Activated B cell treated with CpG ODN at 0.5 μM for 24 hours (primary cell): ENCODE measurements at regions of chr3 and their contacts with region 1.

Region 1: DNA sequence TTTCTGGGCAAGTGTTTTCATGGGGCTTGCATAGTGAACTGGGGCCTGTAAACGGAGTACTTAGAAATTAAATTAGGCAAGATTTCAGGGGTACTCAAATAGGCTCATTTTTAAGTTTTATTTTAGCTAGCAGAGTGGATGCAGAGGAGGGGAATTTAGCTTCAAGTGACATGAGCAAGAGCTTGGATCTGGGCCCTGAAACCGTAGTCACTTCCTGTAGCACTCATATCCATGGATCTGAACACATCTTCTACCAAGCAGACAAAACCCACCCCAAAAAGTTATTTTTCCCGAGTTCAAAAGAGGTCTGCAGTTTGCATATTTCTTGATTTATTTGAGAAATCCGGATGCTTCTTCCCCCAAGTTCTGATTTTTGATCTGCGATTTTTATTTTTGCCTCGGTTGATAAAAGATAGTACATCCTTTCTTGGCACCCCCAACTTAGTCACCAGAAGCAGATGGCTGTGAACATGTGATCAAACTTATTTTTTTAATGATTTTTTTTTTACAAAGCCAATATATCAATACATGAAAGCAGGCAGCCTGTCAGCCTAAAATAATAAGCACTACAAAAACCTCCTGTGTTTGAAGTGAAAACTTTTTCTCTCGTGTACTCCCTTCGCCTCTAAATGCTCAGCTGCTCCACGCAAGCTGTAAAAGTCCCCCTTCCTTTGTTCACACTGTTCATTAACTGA is 36.6 kb upstream of the STT3B start:
- DNase-seq: no peak
- ATAC-seq: no peak
- H3K4me3 Mint-ChIP-seq: no peak overlapping the region
- H3K27ac Mint-ChIP-seq: no peak overlapping the region
- H3K4me1 Mint-ChIP-seq: no peaks in the 10 kb centered on the region
- H3K27me3 Mint-ChIP-seq: peaks cover 4% of the 10 kb centered on the region
- CTCF ChIP-seq: no peak

Region 2: GRCh38 chr3:31439890-31440750 is 56.0 kb before region 1 on chr3:
- CTCF ChIA-PET with region 1: no interaction called
- POLR2A ChIA-PET with region 1: no interaction called
- intact Hi-C with region 1: no loop called
- DNase-seq: no peak
- ATAC-seq: no peak
- H3K4me3 Mint-ChIP-seq: no peak overlapping the region
- H3K27ac Mint-ChIP-seq: no peak overlapping the region
- H3K4me1 Mint-ChIP-seq: peaks cover 5% of the 10 kb centered on the region
- H3K27me3 Mint-ChIP-seq: no peaks in the 10 kb centered on the region
- CTCF ChIP-seq: no peak

Region 3: GRCh38 chr3:31462050-31462569 is 34.0 kb before region 1 on chr3:
- CTCF ChIA-PET with region 1: no interaction called
- POLR2A ChIA-PET with region 1: interaction called, 12 read pairs
- intact Hi-C with region 1: no loop called
- DNase-seq: no peak
- ATAC-seq: peak; percentile 86
- H3K4me3 Mint-ChIP-seq: peak overlapping the region; percentile 44
- H3K27ac Mint-ChIP-seq: peak overlapping the region; percentile 77
- H3K4me1 Mint-ChIP-seq: peaks cover 24% of the 10 kb centered on the region
- H3K27me3 Mint-ChIP-seq: no peaks in the 10 kb centered on the region
- CTCF ChIP-seq: no peak